PC-9 (cell line): ENCODE measurements at regions of chrX and their contacts with region 1.

Region 1: GRCh38 chrX:68732906-68733493 is 85.5 kb downstream of the STARD8 start:
- DNase-seq: peak in 1 of 2 experiments; percentile 54
- H3K4me3 ChIP-seq: no peak overlapping the region
- H3K27ac ChIP-seq: no peak overlapping the region
- H3K4me1 ChIP-seq: no peaks in the 10 kb centered on the region
- H3K27me3 ChIP-seq: peaks cover 11% of the 10 kb centered on the region
- CTCF ChIP-seq: peak; percentile 66

Region 2: GRCh38 chrX:68532831-68533533 is 200.0 kb before region 1 on chrX:
- CTCF ChIA-PET with region 1: no interaction called
- POLR2A ChIA-PET with region 1: interaction called, 24 read pairs
- intact Hi-C with region 1: no loop called
- DNase-seq: no peak
- H3K4me3 ChIP-seq: no peak overlapping the region
- H3K27ac ChIP-seq: no peak overlapping the region
- H3K4me1 ChIP-seq: no peaks in the 10 kb centered on the region
- H3K27me3 ChIP-seq: no peaks in the 10 kb centered on the region
- CTCF ChIP-seq: no peak

Region 3: GRCh38 chrX:70208479-70208878 is 1475.5 kb after region 1 on chrX:
- CTCF ChIA-PET with region 1: no interaction called
- POLR2A ChIA-PET with region 1: no interaction called
- intact Hi-C with region 1: no loop called
- DNase-seq: no peak
- H3K4me3 ChIP-seq: no peak overlapping the region
- H3K27ac ChIP-seq: no peak overlapping the region
- H3K4me1 ChIP-seq: no peaks in the 10 kb centered on the region
- H3K27me3 ChIP-seq: peaks cover 4% of the 10 kb centered on the region; the same call in 1 of the 2 replicates
- CTCF ChIP-seq: no peak